MCF 10A (cell line): ENCODE measurements at regions of chr19 and their contacts with region 1.

Region 1: GRCh38 chr19:46451352-46451751 is 20.0 kb downstream of the PNMA8A start:
- DNase-seq: peak; percentile 39
- H3K4me3 Mint-ChIP-seq: no peak overlapping the region
- H3K27ac Mint-ChIP-seq: peak overlapping the region; percentile 93
- H3K4me1 Mint-ChIP-seq: peaks cover 32% of the 10 kb centered on the region
- H3K27me3 Mint-ChIP-seq: no peaks in the 10 kb centered on the region
- CTCF ChIP-seq: no peak

Region 2: GRCh38 chr19:46461537-46461936 is 10.2 kb after region 1 on chr19:
- CTCF ChIA-PET with region 1: interaction called, 4 read pairs
- POLR2A ChIA-PET with region 1: interaction called, 31 read pairs
- intact Hi-C with region 1: no loop called
- DNase-seq: peak; percentile 73
- H3K4me3 Mint-ChIP-seq: no peak overlapping the region
- H3K27ac Mint-ChIP-seq: no peak overlapping the region
- H3K4me1 Mint-ChIP-seq: peaks cover 3% of the 10 kb centered on the region
- H3K27me3 Mint-ChIP-seq: no peaks in the 10 kb centered on the region
- CTCF ChIP-seq: no peak

Region 3: DNA sequence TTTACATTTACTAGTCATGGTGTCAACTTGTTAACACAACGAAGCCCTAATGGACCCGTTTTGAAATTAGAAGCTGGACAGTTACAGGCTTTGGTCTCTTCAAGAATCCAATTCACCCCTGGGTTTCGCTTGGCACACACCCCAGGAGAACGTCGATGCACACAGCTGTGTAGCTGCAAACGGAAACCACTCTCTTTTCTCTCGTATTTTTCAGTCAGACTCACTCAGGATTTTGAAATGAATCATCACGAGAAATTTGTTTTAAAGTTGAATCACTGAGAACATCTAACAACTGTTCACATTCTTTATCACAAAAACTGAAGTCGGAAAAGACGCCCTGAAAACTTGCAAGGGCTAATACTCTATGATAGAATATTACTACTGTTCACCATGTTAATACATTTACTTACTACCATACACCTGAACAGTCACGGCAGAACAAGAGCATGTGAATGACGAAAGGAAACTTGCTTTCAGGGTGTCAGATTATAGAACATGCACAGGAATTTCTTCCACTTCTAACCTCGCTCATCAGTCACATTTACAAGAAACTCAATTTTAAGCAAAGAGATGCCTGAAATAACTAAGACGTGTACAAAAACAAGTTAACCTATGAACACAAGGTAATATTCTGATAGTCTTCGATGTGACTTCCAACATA is 15.3 kb after region 1 on chr19:
- CTCF ChIA-PET with region 1: interaction called, 3 read pairs
- POLR2A ChIA-PET with region 1: interaction called, 31 read pairs
- intact Hi-C with region 1: no loop called
- DNase-seq: peak; percentile 75
- H3K4me3 Mint-ChIP-seq: peak overlapping the region; percentile 59
- H3K27ac Mint-ChIP-seq: peak overlapping the region; percentile 81
- H3K4me1 Mint-ChIP-seq: peaks cover 15% of the 10 kb centered on the region
- H3K27me3 Mint-ChIP-seq: no peaks in the 10 kb centered on the region
- CTCF ChIP-seq: no peak

Region 4: GRCh38 chr19:46474211-46474610 is 22.9 kb after region 1 on chr19:
- CTCF ChIA-PET with region 1: no interaction called
- POLR2A ChIA-PET with region 1: interaction called, 28 read pairs
- intact Hi-C with region 1: no loop called
- DNase-seq: peak; percentile 29
- H3K4me3 Mint-ChIP-seq: peak overlapping the region; percentile 6
- H3K27ac Mint-ChIP-seq: peak overlapping the region; percentile 71
- H3K4me1 Mint-ChIP-seq: peaks cover 18% of the 10 kb centered on the region
- H3K27me3 Mint-ChIP-seq: no peaks in the 10 kb centered on the region
- CTCF ChIP-seq: no peak